AG04449 (cell line): ENCODE measurements at regions of chr1 and their contacts with region 1.

Region 1: DNA sequence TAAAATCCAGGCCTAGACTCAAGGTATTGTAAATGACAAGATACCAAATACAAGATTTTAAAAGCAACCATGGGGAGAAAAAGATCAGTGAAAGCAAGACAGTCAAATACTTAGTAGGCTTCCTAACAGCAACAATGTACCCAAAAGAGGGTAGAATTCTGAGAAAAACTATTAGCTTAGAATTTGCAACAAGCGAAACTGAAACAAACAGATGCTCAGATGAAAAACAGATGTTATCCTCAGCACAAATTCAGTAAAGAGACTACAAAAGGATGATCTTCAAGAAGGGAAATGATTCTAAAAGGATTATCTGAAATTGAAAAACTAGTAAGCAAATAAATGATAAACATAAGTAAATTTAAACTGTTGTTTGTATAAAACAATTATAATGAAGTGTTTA is 40.0 kb downstream of the PDC start:
- DNase-seq: no peak
- H3K4me3 ChIP-seq: no peak overlapping the region
- CTCF ChIP-seq: no peak

Region 2: DNA sequence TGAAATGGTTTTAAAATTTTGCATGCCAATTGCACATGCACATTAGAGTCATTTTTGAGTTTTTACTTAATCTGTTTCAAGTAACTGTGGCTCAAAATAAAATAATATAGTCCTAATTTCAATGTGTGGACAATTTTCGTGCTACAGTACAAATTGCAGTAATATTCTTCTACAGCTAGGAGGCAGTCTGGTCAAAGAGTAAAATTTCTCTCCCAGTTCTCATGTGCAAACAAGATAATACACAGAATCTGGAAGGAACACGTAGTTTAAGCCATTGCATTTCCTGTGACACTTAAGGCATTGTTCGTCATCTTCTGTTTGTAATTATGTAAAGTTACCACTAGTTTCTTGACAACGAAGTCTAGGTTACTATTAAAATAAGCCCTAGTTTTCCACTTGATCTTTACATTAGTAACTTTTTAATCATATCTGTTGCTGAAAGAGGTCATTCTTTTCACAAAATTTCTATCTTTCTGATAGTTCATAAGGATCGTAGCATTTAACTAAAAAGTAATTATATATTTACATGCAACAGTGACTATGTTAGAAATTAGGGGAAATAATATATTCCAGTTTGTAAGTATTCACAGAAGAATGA is 16.4 kb before region 1 on chr1:
- CTCF ChIA-PET with region 1: interaction called, 13 read pairs
- POLR2A ChIA-PET with region 1: no interaction called
- DNase-seq: peak; percentile 17
- H3K4me3 ChIP-seq: no peak overlapping the region
- CTCF ChIP-seq: peak; percentile 60